GM23248 (cell line): ENCODE measurements at regions of chr13 and their contacts with region 1.

Region 1: GRCh38 chr13:85806553-85807175 is 7.4 kb upstream of the SLITRK6 start:
- DNase-seq: peak; percentile 47
- H3K4me3 ChIP-seq: no peak overlapping the region
- H3K27ac ChIP-seq: no peak overlapping the region
- H3K4me1 ChIP-seq: no peaks in the 10 kb centered on the region
- H3K27me3 ChIP-seq: no peaks in the 10 kb centered on the region

Region 2: DNA sequence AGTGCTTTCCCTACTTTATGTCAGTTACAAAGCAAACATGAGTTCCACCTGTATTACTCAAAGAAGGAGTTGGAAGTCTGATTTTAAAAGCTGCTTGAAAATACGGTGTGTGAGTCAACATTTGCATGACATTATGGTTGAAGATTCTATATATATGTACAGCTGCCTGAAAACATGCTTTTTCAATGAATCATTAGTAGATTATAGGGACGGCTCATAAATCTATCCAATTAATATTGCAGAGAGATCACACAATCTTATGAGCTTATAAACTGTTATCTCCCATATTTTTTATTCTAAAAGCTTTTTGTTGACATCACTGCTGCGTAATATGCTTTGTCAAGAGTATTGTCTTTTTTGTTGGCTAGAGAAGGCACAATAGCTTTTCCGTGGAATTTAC is 881.2 kb before region 1 on chr13:
- in situ Hi-C with region 1: loop called (anchors 10 kb)
- DNase-seq: no peak
- H3K4me3 ChIP-seq: no peak overlapping the region
- H3K27ac ChIP-seq: no peak overlapping the region
- H3K4me1 ChIP-seq: no peaks in the 10 kb centered on the region
- H3K27me3 ChIP-seq: no peaks in the 10 kb centered on the region